CD4-positive, alpha-beta memory T cell (primary cell): ENCODE measurements at regions of chr17 and their contacts with region 1.

Region 1: DNA sequence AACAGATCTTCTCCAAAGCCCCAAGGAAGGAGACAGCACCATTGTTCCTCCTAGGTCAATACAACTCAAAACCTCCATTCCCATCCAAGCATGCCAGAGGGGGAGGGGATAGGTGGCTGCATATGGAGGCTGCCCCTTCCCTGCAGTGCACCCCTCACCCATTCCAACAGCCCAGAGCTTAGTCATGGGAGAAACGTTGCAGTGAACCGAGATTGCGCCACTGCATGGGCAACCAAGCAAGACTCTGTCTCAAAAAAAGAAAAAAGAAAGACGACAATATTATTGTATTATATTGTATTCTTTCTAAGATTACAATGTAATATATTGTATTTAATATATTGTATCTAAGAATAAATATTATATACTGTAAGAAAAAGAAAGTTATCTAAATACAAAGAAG is 36.4 kb upstream of the CD300E start:
- DNase-seq: no peak
- H3K4me3 ChIP-seq: no peak overlapping the region
- H3K4me3 Mint-ChIP-seq: no peak overlapping the region
- H3K27ac ChIP-seq: no peak overlapping the region
- H3K27ac Mint-ChIP-seq: no peak overlapping the region
- H3K4me1 ChIP-seq: peaks cover 3% of the 10 kb centered on the region
- H3K4me1 Mint-ChIP-seq: peaks cover 4 to 7% (median 5%) of the 10 kb centered on the region in 4 donors
- H3K27me3 ChIP-seq: no peaks in the 10 kb centered on the region
- H3K27me3 Mint-ChIP-seq: peaks cover 21 to 25% of the 10 kb centered on the region in 2 donors

Region 2: GRCh38 chr17:74190172-74190571 is 469.7 kb before region 1 on chr17:
- CTCF ChIA-PET with region 1: no interaction called
- POLR2A ChIA-PET with region 1: no interaction called
- intact Hi-C with region 1: no loop called
- DNase-seq: peak in 1 of 5 donors; percentile 23
- H3K4me3 ChIP-seq: no peak overlapping the region
- H3K4me3 Mint-ChIP-seq: no peak overlapping the region
- H3K27ac ChIP-seq: no peak overlapping the region
- H3K27ac Mint-ChIP-seq: no peak overlapping the region
- H3K4me1 ChIP-seq: no peaks in the 10 kb centered on the region
- H3K4me1 Mint-ChIP-seq: peaks cover 0 to 6% (median 0%) of the 10 kb centered on the region in 4 donors
- H3K27me3 ChIP-seq: no peaks in the 10 kb centered on the region
- H3K27me3 Mint-ChIP-seq: peaks cover 9 to 25% of the 10 kb centered on the region in 2 donors

Region 3: DNA sequence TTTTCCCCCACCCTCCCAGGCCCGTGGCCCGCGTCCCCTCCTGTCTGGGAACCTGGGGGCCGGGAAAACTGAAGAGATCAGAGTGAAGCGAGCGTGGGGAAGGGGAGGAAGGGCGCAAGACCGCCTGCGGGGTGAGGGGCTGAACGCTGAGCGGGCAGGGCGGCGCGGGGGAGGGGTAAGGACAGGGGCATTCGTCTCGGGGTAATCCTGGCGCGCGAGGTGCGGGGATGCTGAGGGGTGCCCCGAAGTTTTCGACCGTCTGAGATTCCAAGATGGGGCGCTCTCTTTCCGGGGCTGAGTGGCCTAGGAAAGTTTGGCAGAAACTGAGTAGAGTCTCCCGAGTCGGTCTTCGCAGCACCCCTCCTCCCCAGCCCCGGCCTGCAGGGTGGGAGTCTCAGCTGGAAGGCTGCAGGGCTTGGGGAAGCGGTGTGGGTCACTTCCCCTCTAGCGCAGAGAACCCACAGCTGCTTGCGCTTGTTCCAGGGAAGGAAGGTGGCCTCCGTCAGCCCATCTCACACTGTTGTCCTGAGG is 446.0 kb before region 1 on chr17:
- CTCF ChIA-PET with region 1: no interaction called
- POLR2A ChIA-PET with region 1: no interaction called
- intact Hi-C with region 1: no loop called
- DNase-seq: no peak
- H3K4me3 ChIP-seq: peak overlapping the region; percentile 42 to 58
- H3K4me3 Mint-ChIP-seq: peak overlapping the region; percentile 83 to 97 (median 91)
- H3K27ac ChIP-seq: peak overlapping the region; percentile 52
- H3K27ac Mint-ChIP-seq: peak overlapping the region in 6 of 7 donors; percentile 64 to 97 (median 80)
- H3K4me1 ChIP-seq: peaks cover 57% of the 10 kb centered on the region
- H3K4me1 Mint-ChIP-seq: peaks cover 26 to 66% (median 44%) of the 10 kb centered on the region in 4 donors
- H3K27me3 ChIP-seq: no peaks in the 10 kb centered on the region
- H3K27me3 Mint-ChIP-seq: no peaks in the 10 kb centered on the region

Region 4: DNA sequence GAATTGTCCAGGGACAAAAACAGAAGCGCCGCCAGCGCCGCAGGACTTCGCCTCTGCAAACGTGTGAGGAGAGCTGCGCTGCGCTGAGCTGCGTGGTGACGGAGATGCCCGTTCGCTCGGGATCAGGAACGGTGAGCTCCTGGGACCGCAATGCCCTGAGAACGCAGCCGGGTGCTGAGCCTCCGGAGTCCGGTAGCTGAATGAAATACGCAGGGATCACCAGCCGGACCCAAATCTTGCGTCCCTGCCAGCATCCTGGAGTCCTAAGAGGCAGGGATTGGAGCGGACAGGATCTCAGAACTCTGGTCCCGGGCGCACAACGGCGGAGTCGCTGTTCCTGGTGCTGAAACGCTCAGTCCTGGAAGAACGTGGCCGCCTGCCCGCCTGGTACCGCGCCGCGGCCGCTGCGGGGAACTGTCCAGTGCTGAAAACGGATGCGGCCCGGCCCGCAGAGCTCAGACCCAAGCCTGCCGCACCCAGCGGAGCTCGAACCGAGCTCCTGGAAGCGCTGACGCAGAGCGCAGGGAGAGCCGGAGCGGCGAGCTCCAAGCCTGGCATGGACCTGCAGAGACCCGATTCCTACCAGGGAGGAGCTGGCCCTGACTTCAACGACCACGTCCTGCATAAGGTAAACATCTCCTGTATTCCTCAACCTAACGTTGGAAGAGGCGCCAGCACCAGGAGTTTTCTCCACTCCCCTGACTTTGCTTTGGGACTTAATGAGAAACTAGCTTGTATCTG is 11.3 kb after region 1 on chr17:
- CTCF ChIA-PET with region 1: interaction called, 35 read pairs
- POLR2A ChIA-PET with region 1: interaction called, 3 read pairs
- intact Hi-C with region 1: no loop called
- DNase-seq: peak; percentile 64 to 73 (median 68)
- H3K4me3 ChIP-seq: no peak overlapping the region
- H3K4me3 Mint-ChIP-seq: no peak overlapping the region
- H3K27ac ChIP-seq: no peak overlapping the region
- H3K27ac Mint-ChIP-seq: peak overlapping the region in 3 of 7 donors; percentile 41 to 73 (median 62)
- H3K4me1 ChIP-seq: no peaks in the 10 kb centered on the region
- H3K4me1 Mint-ChIP-seq: peaks cover 0 to 17% (median 2%) of the 10 kb centered on the region in 4 donors
- H3K27me3 ChIP-seq: peaks cover 7% of the 10 kb centered on the region
- H3K27me3 Mint-ChIP-seq: peaks cover 32 to 38% of the 10 kb centered on the region in 2 donors

Region 5: DNA sequence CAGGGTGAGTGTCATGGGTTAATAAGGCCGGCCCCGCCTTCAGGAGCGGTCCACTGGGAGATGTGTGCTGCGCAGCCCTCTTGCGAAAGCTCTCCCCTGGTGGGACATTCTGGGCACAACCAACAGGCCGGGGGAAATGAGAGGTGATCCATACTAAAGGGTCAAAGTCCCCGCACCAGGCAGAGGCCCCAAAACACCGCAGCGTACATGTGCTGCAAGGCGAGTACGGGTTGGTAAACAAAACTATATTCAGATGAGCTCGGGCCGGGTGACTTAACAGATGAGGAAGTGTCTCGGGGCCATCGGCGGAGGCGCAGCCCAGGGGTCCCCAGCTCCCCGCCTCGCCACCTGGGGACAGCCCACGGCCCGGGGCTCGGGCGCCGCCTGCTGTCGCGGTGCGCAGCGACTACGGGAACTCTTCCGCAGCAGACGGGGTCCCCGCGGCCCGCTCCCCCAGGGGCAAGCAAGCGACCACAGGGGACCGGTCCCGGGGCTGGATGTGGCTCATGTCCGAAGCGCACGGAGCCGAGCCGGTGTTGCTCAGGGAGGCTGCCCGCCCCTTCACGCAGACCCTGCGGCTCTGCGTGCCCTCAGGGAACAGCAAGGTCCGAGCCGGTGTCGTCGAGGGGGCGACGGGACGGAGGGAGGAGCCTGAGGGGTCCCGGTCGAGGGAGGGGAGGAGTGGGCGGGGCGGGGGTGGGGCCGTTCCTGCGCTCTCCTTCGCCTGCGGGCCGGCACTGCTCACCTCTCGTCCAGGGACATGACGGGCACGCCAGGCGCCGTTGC is 76.8 kb after region 1 on chr17 and contains the start of gene RAB37:
- CTCF ChIA-PET with region 1: interaction called, 326 read pairs
- POLR2A ChIA-PET with region 1: interaction called, 85 read pairs
- intact Hi-C with region 1: loop called (anchors 1 kb)
- DNase-seq: peak in 4 of 5 donors; percentile 37 to 64 (median 44)
- H3K4me3 ChIP-seq: peak within 1 kb of the TSS; percentile 79 to 100
- H3K4me3 Mint-ChIP-seq: peak within 1 kb of the TSS; percentile 91 to 96 (median 94)
- H3K27ac ChIP-seq: peak within 1 kb of the TSS; percentile 64
- H3K27ac Mint-ChIP-seq: peak within 1 kb of the TSS in 6 of 7 donors; percentile 85 to 93 (median 87)
- H3K4me1 ChIP-seq: peaks cover 53% of the 10 kb centered on the region
- H3K4me1 Mint-ChIP-seq: peaks cover 31 to 60% (median 40%) of the 10 kb centered on the region in 4 donors
- H3K27me3 ChIP-seq: no peaks in the 10 kb centered on the region
- H3K27me3 Mint-ChIP-seq: no peaks in the 10 kb centered on the region
- total RNA-seq, gene RAB37: 23.2 to 25.9 TPM

Region 6: GRCh38 chr17:74759243-74759801 is 99.4 kb after region 1 on chr17:
- CTCF ChIA-PET with region 1: interaction called, 49 read pairs
- POLR2A ChIA-PET with region 1: interaction called, 6 read pairs
- intact Hi-C with region 1: no loop called
- DNase-seq: peak; percentile 63 to 75 (median 64)
- H3K4me3 ChIP-seq: peak overlapping the region; percentile 34 to 54
- H3K4me3 Mint-ChIP-seq: peak overlapping the region; percentile 74 to 90 (median 84)
- H3K27ac ChIP-seq: peak overlapping the region; percentile 65
- H3K27ac Mint-ChIP-seq: peak overlapping the region; percentile 84 to 93 (median 90)
- H3K4me1 ChIP-seq: peaks cover 94% of the 10 kb centered on the region
- H3K4me1 Mint-ChIP-seq: peaks cover 42 to 84% (median 65%) of the 10 kb centered on the region in 4 donors
- H3K27me3 ChIP-seq: no peaks in the 10 kb centered on the region
- H3K27me3 Mint-ChIP-seq: no peaks in the 10 kb centered on the region

Region 7: DNA sequence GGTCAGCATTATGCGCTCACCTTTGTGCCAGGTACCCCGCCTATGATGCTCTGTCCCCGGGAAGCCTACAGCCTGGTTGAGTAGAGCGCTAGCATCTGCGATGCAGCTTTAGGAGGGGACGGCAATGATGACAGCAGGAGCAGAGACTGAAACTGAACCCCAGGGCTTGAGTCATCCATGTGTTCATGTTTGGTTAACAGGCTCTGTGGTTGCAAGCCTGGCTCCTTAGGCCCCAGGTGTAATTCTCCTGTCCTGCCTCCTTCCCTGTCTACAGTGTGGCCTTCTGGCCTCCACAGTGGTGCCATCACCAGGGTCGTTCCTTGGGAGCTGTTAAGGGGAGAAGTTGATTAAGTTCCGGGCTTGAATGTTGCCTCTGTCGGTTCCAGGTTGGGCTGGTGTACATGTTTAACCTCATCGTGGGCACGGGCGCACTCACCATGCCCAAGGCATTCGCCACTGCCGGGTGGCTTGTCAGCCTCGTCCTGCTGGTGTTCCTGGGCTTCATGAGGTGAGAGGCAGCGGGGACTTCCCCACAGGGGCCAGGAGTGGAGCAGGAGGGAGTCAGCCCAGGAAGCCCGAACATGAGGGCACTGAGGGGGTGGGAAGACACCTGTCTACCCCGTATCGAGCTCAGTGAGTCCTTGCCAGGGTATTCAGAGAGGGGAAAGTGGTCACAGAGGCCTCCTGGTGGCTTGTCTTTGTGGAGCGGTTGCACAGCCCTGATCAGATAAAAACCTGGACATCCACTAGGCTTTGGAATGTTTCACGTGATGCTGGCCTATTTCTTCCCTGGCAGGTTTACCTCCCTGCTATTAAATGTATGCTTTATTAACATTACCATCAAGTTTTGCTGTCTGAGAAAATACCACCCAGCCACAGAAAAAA is 125.4 kb after region 1 on chr17:
- CTCF ChIA-PET with region 1: interaction called, 181 read pairs
- POLR2A ChIA-PET with region 1: interaction called, 8 read pairs
- intact Hi-C with region 1: no loop called
- DNase-seq: no peak
- H3K4me3 ChIP-seq: no peak overlapping the region
- H3K4me3 Mint-ChIP-seq: peak overlapping the region in 1 of 8 donors; percentile 22
- H3K27ac ChIP-seq: no peak overlapping the region
- H3K27ac Mint-ChIP-seq: peak overlapping the region; percentile 7 to 78 (median 64)
- H3K4me1 ChIP-seq: peaks cover 37% of the 10 kb centered on the region
- H3K4me1 Mint-ChIP-seq: peaks cover 34 to 72% (median 46%) of the 10 kb centered on the region in 4 donors
- H3K27me3 ChIP-seq: no peaks in the 10 kb centered on the region
- H3K27me3 Mint-ChIP-seq: no peaks in the 10 kb centered on the region